ENCODE measurements at regions of chr12 and their contacts with region 1.

Region 1: DNA sequence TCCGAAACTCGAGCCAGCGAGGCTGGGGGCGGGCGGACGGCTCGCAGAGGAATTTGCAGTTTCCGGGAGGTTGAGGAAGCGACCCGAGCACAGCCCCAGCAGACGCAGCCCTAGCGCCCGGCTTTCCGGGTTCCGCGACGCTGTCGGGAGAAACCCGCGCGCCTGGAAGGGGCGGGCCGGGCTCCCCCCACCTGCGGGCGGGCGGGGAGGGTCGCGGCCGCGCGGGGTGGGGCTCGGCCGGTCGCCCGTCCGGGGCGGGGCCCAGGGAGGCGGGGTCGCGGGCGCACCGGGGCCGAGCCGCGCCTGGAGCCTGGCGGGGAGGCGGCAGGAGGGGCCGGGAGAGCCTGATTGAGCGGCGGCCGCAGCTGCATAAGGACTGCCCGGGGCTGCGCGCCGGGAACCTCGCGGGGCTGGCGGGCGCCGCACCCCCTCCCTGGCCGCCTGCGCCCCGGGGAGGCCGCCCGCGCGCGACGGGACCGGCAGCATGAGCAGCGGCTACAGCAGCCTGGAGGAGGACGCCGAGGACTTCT is at the start of gene RASSF3:
- DNase-seq: peak; percentile 87 to 94 (median 91)
- ATAC-seq: peak; percentile 71
- H3K4me3 ChIP-seq: peak within 1 kb of the TSS; percentile 87
- H3K27ac ChIP-seq: peak within 1 kb of the TSS; percentile 80
- H3K4me1 ChIP-seq: peaks cover 8 to 20% of the 10 kb centered on the region in 2 experiments; a peak in 4 of 5 replicates
- H3K27me3 ChIP-seq: no peaks in the 10 kb centered on the region
- CTCF ChIP-seq: no peak
- EP300 ChIP-seq: no peak
- POLR2A ChIP-seq: 0 out of 2 replicates have a peak, but pooled peaks have one; percentile 61
- RAD21 ChIP-seq: no peak
- polyA plus RNA-seq, gene RASSF3: 3.7 to 4.3 TPM

Region 2: DNA sequence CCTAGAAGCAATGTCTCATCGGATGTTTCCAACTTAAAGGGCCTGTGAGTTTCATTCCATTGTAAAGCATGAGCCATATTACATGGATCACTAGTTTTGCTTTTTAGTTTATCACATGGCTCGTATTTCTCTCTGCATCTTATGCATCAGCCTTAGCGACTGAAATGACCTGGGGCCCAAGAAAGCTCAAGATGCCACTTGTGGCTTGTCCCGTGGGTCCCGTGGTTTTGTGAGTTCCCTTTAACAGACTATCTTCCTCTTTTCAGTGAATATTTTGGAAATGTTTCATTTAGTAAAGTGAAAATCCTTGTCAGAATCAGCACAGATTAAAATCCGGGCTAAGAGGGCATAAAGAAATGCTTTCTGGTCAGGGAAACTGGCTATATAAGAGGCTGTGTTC is 1589.1 kb before region 1 on chr12:
- CTCF ChIA-PET with region 1: no interaction called
- POLR2A ChIA-PET with region 1: no interaction called
- in situ Hi-C with region 1: no loop called
- intact Hi-C with region 1: loop called (anchors 10 kb)
- DNase-seq: no peak
- ATAC-seq: no peak
- H3K4me3 ChIP-seq: no peak overlapping the region
- H3K27ac ChIP-seq: no peak overlapping the region
- H3K4me1 ChIP-seq: no peaks in the 10 kb centered on the region
- H3K27me3 ChIP-seq: no peaks in the 10 kb centered on the region
- CTCF ChIP-seq: no peak
- EP300 ChIP-seq: no peak
- POLR2A ChIP-seq: no peak
- RAD21 ChIP-seq: no peak

Region 3: DNA sequence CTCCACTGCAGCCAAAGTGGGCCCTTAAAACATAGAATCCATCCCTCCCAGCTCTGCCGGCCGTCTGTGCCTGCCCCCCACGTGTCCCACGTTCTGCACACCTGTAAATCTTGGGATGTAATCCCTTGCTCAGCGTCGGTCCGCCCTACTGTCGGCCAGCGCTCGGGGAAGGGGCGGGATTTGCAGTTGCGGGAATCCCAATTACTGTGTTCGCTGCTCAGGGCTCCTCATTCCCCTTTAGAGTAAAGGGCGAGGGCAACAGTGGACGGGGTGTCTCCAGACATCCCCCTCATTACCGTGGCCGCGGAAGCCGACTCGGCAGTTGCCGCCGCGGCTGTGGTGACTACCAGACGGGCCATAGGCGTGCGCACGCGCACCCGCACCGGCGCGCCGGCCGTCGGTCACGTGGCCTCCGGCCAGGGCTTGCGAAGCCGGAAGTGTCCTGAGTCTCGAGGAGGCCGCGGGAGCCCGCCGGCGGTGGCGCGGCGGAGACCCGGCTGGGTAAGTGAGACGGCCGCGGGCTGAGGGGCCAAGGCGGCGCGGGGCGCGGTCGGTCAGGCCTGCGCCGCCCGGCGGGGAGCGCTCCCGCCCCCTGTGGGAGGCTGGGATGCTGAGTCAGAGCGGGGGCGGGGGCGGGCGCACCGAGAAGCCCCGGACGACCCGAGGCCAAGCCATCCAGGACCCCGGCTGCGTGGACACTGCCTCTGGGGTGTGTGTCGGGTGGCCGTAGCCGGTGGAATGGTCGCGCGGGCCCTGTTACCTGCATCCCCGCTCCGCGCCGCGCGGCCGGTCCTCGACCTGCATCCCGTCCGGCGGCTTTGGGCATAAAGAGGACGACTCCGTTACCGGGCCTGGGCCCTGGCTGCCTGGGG is 158.3 kb before region 1 on chr12 and contains the start of gene TBK1:
- CTCF ChIA-PET with region 1: no interaction called
- POLR2A ChIA-PET with region 1: no interaction called
- in situ Hi-C with region 1: no loop called
- intact Hi-C with region 1: loop called (anchors 5 kb)
- DNase-seq: peak; percentile 91 to 93 (median 92)
- ATAC-seq: peak; percentile 88
- H3K4me3 ChIP-seq: peak within 1 kb of the TSS; percentile 88
- H3K27ac ChIP-seq: peak within 1 kb of the TSS; percentile 98
- H3K4me1 ChIP-seq: peaks cover 11 to 21% of the 10 kb centered on the region in 2 experiments
- H3K27me3 ChIP-seq: no peaks in the 10 kb centered on the region
- CTCF ChIP-seq: 0 out of 6 replicates have a peak, but pooled peaks of 1 of the 3 experiments have one; percentile 2
- EP300 ChIP-seq: no peak
- POLR2A ChIP-seq: peak; percentile 83
- RAD21 ChIP-seq: no peak
- polyA plus RNA-seq, gene TBK1: 20.4 to 24.9 TPM

Region 4: DNA sequence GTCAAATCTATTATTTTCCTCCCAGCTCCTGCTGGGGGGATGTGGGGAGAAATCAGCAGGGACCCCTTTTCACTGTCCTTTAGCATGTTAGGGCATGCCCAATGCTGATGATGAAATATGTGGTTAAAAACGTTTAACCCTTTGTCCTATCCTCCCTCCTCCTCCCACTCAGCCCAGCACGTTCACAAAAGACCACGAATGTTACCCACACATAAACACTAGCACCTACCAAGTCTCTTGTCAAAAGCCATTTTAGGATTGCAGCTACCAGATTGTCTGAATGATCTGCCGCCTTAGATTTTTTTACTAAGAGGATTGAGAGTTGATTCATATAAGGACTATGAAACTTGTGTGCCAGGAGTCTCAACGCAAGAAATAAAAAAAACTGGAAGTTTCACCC is 87.9 kb before region 1 on chr12:
- CTCF ChIA-PET with region 1: no interaction called
- POLR2A ChIA-PET with region 1: no interaction called
- in situ Hi-C with region 1: no loop called
- intact Hi-C with region 1: no loop called
- DNase-seq: no peak
- ATAC-seq: no peak; the same call in 2 of the 3 replicates
- H3K4me3 ChIP-seq: no peak overlapping the region
- H3K27ac ChIP-seq: no peak overlapping the region
- H3K4me1 ChIP-seq: peaks cover 0 to 3% of the 10 kb centered on the region in 2 experiments; a peak in 2 of 5 replicates
- H3K27me3 ChIP-seq: peaks cover 16 to 17% of the 10 kb centered on the region in 2 experiments; a peak in 4 of 5 replicates
- CTCF ChIP-seq: no peak
- EP300 ChIP-seq: no peak
- POLR2A ChIP-seq: no peak
- RAD21 ChIP-seq: no peak

Region 5: DNA sequence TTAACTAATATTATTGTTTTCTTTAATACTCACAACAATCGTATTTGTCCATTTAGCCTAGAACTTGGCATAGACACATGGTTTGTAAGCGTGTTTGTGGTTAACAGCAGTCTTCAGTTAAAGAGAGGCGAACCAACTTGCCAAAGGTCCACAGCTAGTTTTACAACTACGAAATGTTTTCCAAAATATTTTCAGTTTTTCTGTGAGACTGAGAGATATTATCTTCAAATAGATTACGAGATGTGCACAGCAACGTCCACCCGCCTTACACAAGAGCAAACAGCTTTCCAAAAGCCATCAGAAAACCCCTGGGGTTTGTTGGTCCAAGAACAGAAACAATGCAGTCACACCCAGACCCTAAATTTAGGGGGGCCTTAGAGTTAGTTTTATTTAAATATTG is 58.5 kb before region 1 on chr12:
- CTCF ChIA-PET with region 1: interaction called, 6 read pairs
- POLR2A ChIA-PET with region 1: no interaction called
- in situ Hi-C with region 1: no loop called
- intact Hi-C with region 1: loop called (anchors 1 kb)
- DNase-seq: no peak
- ATAC-seq: no peak
- H3K4me3 ChIP-seq: no peak overlapping the region
- H3K27ac ChIP-seq: no peak overlapping the region
- H3K4me1 ChIP-seq: no peaks in the 10 kb centered on the region
- H3K27me3 ChIP-seq: peaks cover 4 to 12% of the 10 kb centered on the region in 2 experiments; a peak in 4 of 5 replicates
- CTCF ChIP-seq: no peak
- EP300 ChIP-seq: no peak
- POLR2A ChIP-seq: no peak
- RAD21 ChIP-seq: no peak

Region 6: DNA sequence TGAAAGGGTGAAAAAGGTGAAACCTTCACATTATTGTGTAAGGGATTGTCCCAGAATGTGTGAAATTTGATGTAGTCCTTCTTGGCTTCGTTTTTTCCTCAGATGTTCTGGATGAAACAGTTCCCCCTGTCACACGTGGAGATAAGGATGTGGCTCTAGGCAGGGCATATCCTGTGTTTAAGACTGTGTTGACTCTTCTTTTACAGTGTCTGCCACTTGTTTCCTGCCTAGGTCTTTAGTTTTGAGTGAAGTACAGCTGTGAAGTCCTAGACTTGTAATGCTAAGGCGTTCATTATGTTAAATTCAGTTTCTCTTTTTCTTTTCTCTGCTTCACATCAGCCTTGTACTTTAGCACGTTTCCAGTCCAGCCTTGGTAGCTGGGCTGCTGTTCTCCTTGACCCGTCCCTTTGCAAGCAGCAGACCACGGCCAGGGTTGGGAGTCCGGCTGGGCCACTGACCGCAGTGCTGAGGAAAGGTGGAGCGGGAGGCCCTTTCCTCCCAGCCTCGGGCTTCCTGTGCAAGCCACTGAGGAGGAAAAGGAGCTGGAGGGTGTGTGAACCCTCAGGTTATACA is 59.1 kb after region 1 on chr12:
- CTCF ChIA-PET with region 1: no interaction called
- POLR2A ChIA-PET with region 1: interaction called, 3 read pairs
- in situ Hi-C with region 1: no loop called
- intact Hi-C with region 1: loop called (anchors 2 kb)
- DNase-seq: peak in 2 of 4 experiments; percentile 37 to 66
- ATAC-seq: peak; percentile 66
- H3K4me3 ChIP-seq: no peak overlapping the region
- H3K27ac ChIP-seq: peak overlapping the region; percentile 73
- H3K4me1 ChIP-seq: peaks cover 48 to 80% of the 10 kb centered on the region in 2 experiments
- H3K27me3 ChIP-seq: no peaks in the 10 kb centered on the region
- CTCF ChIP-seq: no peak
- EP300 ChIP-seq: no peak
- POLR2A ChIP-seq: no peak
- RAD21 ChIP-seq: no peak; a peak in 1 of 4 replicates

Region 7: DNA sequence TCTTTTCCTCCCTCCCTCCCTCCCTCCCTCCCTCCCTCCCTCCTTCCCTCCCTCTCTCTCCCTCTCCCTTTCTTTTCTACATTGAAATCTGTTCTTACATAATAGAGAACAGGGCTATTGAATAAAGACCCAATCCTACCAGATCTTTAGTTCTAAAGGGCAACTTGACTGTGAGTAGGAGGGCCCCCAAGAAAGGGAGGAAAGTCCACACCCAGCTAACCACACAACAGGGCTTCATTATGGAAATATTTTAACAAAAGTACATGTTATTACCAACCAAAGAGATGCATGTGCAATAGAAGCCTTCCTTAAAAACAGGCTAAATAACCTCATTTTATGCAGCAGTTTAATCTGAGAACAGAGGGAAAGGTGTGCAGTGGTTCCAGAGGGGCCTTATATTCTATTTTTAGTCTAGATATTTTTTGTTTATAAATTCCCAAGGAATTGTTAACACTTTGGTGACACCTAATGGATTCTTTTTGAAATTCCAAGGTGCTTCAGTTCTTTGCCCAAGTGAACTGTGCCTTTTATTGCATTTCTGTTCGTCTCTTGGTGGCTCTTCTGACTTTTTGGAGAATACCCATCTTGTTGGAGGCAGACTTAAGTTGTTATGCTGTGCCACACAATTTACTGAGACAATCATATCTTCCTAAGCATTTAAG is 86.0 kb after region 1 on chr12:
- CTCF ChIA-PET with region 1: no interaction called
- POLR2A ChIA-PET with region 1: no interaction called
- in situ Hi-C with region 1: no loop called
- intact Hi-C with region 1: loop called (anchors 5 kb)
- DNase-seq: peak in 2 of 4 experiments; percentile 24 to 44
- ATAC-seq: peak; percentile 11; the same call in 1 of the 3 replicates
- H3K4me3 ChIP-seq: no peak overlapping the region
- H3K27ac ChIP-seq: no peak overlapping the region
- H3K4me1 ChIP-seq: peaks cover 14 to 17% of the 10 kb centered on the region in 2 experiments; a peak in 4 of 5 replicates
- H3K27me3 ChIP-seq: no peaks in the 10 kb centered on the region
- CTCF ChIP-seq: peak in 2 of 3 experiments; percentile 40 to 58; a peak in 3 of 6 replicates
- EP300 ChIP-seq: no peak
- POLR2A ChIP-seq: no peak
- RAD21 ChIP-seq: peak; percentile 73 to 82

Region 8: GRCh38 chr12:65238609-65239008 is 628.4 kb after region 1 on chr12:
- CTCF ChIA-PET with region 1: no interaction called
- POLR2A ChIA-PET with region 1: no interaction called
- in situ Hi-C with region 1: no loop called
- intact Hi-C with region 1: no loop called
- DNase-seq: no peak
- ATAC-seq: no peak
- H3K4me3 ChIP-seq: no peak overlapping the region
- H3K27ac ChIP-seq: no peak overlapping the region
- H3K4me1 ChIP-seq: no peaks in the 10 kb centered on the region
- H3K27me3 ChIP-seq: no peaks in the 10 kb centered on the region
- CTCF ChIP-seq: no peak
- EP300 ChIP-seq: no peak
- POLR2A ChIP-seq: no peak
- RAD21 ChIP-seq: no peak